Activated naive CD8-positive, alpha-beta T cell treated with anti-CD3 and anti-CD28 coated beads, Interleukin-2, amount 10 ng/mL, durations not matched to agents 7 days and 5 days (primary cell): ENCODE measurements at regions of chr10 and their contacts with region 1.

Region 1: GRCh38 chr10:22316285-22317120 is at the start of gene COMMD3:
- DNase-seq: peak; percentile 90
- ATAC-seq: peak; percentile 67
- H3K4me3 Mint-ChIP-seq: peak within 1 kb of the TSS; percentile 90
- H3K27ac Mint-ChIP-seq: peak within 1 kb of the TSS; percentile 89
- H3K4me1 Mint-ChIP-seq: peaks cover 23% of the 10 kb centered on the region
- H3K27me3 Mint-ChIP-seq: peaks cover 36% of the 10 kb centered on the region
- total RNA-seq, gene COMMD3: 55.3 to 61.4 TPM

Region 2: GRCh38 chr10:22003079-22003913 is 313.2 kb before region 1 on chr10 and contains the start of gene DNAJC1:
- POLR2A ChIA-PET with region 1: interaction called, 13 read pairs
- DNase-seq: peak; percentile 99
- ATAC-seq: peak; percentile 94
- H3K4me3 Mint-ChIP-seq: peak within 1 kb of the TSS; percentile 98
- H3K27ac Mint-ChIP-seq: peak within 1 kb of the TSS; percentile 97
- H3K4me1 Mint-ChIP-seq: peaks cover 27% of the 10 kb centered on the region
- H3K27me3 Mint-ChIP-seq: peaks cover 12% of the 10 kb centered on the region
- total RNA-seq, gene DNAJC1: 22.3 to 23.0 TPM

Region 3: GRCh38 chr10:22228943-22229801 is 87.3 kb before region 1 on chr10:
- POLR2A ChIA-PET with region 1: interaction called, 30 read pairs
- DNase-seq: peak; percentile 88
- ATAC-seq: peak; percentile 78
- H3K4me3 Mint-ChIP-seq: peak overlapping the region; percentile 89
- H3K27ac Mint-ChIP-seq: peak overlapping the region; percentile 96
- H3K4me1 Mint-ChIP-seq: peaks cover 24% of the 10 kb centered on the region
- H3K27me3 Mint-ChIP-seq: peaks cover 13% of the 10 kb centered on the region

Region 4: DNA sequence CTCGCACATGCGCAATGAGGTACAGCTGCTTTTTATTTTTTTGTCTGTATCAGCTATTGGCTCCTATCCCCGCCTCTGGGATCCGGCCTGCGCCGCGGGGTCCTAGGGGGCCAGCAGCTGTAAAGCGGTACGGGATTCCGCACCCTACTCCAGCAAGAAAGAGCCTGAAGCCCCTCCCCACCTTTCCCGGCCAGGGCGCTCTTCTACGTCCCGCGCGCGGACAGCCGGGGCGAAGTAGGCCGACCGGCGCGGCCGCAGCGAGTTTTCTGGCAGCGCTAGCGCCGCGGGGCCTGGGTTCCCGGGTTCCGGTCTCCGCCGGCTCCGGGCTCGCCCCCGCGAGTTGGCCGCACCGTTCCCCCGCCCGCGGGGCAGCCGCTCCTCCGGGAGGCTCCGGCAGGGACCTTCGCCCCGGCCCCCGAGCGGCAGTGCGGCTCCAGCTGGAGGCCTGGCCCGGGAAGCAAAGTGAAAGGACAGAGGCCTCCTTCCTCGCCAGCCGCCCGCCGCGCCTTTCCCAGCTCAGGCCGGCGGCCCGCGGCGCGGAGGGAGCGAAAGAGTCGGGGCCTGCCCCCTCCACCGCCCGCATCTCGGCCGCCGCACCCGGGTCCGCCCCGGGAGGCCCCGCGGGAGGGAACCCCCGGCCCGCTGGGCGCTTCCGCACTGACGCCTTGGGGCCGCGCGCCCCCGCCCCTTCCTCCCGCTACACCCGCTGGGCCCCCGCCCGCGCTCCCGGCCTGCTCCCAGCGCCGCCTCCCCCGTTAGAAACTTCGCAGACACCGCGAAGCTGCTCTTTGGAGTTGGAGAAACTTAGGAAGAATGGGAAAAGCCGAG is 24.1 kb after region 1 on chr10:
- POLR2A ChIA-PET with region 1: interaction called, 19 read pairs
- DNase-seq: peak; percentile 85
- ATAC-seq: peak; percentile 64
- H3K4me3 Mint-ChIP-seq: peak overlapping the region; percentile 89
- H3K27ac Mint-ChIP-seq: peak overlapping the region; percentile 88
- H3K4me1 Mint-ChIP-seq: peaks cover 31% of the 10 kb centered on the region
- H3K27me3 Mint-ChIP-seq: peaks cover 79% of the 10 kb centered on the region

Region 5: DNA sequence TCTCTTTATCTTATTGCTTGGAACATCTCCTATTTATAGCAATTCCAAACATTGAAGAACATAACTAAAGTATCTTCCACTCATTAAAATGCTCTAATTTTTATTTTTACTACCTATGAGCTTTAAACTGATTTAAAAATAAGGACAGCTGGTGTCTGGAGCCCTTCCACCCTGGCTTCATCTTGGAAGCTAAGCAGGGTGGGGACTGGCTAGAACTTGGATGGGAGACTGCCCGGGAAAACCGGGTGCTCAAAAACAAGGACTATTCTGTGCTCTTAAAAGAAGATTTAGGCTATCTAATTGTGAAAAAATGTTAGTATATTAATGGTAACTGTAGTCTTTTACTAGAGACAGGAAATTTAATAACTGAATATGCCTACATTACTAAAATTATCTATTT is 680.6 kb after region 1 on chr10:
- POLR2A ChIA-PET with region 1: no interaction called
- DNase-seq: no peak
- ATAC-seq: no peak
- H3K4me3 Mint-ChIP-seq: no peak overlapping the region
- H3K27ac Mint-ChIP-seq: no peak overlapping the region
- H3K4me1 Mint-ChIP-seq: peaks cover 1% of the 10 kb centered on the region
- H3K27me3 Mint-ChIP-seq: peaks cover 29% of the 10 kb centered on the region